RWPE1 (cell line): ENCODE measurements at regions of chr17 and their contacts with region 1.

Region 1: GRCh38 chr17:31388770-31389661 is 2.5 kb upstream of the RAB11FIP4 start:
- DNase-seq: peak; percentile 46
- H3K27ac ChIP-seq: no peak overlapping the region
- CTCF ChIP-seq: peak; percentile 53

Region 2: GRCh38 chr17:31401456-31402254 is 12.6 kb after region 1 on chr17:
- CTCF ChIA-PET with region 1: interaction called, 10 read pairs
- POLR2A ChIA-PET with region 1: no interaction called
- DNase-seq: no peak
- H3K27ac ChIP-seq: no peak overlapping the region
- CTCF ChIP-seq: no peak

Region 3: GRCh38 chr17:31467502-31468256 is 78.7 kb after region 1 on chr17:
- CTCF ChIA-PET with region 1: no interaction called
- POLR2A ChIA-PET with region 1: no interaction called
- DNase-seq: no peak
- H3K27ac ChIP-seq: no peak overlapping the region
- CTCF ChIP-seq: no peak

Region 4: GRCh38 chr17:31740611-31741082 is 351.6 kb after region 1 on chr17:
- CTCF ChIA-PET with region 1: no interaction called
- POLR2A ChIA-PET with region 1: no interaction called
- DNase-seq: no peak
- H3K27ac ChIP-seq: no peak overlapping the region
- CTCF ChIP-seq: no peak